ENCODE measurements at regions of chr7 and their contacts with region 1.

Region 1: GRCh38 chr7:81285142-81285871 is 366.5 kb upstream of the SEMA3C start:
- DNase-seq: no peak
- H3K4me3 ChIP-seq: no peak overlapping the region
- H3K27ac ChIP-seq: no peak overlapping the region
- H3K4me1 ChIP-seq: no peaks in the 10 kb centered on the region
- CTCF ChIP-seq: no peak

Region 2: GRCh38 chr7:81233208-81233940 is 51.9 kb before region 1 on chr7:
- CTCF ChIA-PET with region 1: no interaction called
- POLR2A ChIA-PET with region 1: interaction called, 3 read pairs
- intact Hi-C with region 1: loop called (anchors 1 kb)
- DNase-seq: no peak
- H3K4me3 ChIP-seq: no peak overlapping the region
- H3K27ac ChIP-seq: no peak overlapping the region
- H3K4me1 ChIP-seq: no peaks in the 10 kb centered on the region
- CTCF ChIP-seq: no peak

Region 3: GRCh38 chr7:81583882-81584533 is 298.7 kb after region 1 on chr7:
- CTCF ChIA-PET with region 1: no interaction called
- POLR2A ChIA-PET with region 1: no interaction called
- intact Hi-C with region 1: no loop called
- DNase-seq: no peak
- H3K4me3 ChIP-seq: no peak overlapping the region
- H3K27ac ChIP-seq: no peak overlapping the region
- H3K4me1 ChIP-seq: no peaks in the 10 kb centered on the region
- CTCF ChIP-seq: no peak

Measured in OCI-LY7 (cell line).